Right lobe of liver (tissue), 6 donors: ENCODE measurements at regions of chr3 and their contacts with region 1.

Region 1: DNA sequence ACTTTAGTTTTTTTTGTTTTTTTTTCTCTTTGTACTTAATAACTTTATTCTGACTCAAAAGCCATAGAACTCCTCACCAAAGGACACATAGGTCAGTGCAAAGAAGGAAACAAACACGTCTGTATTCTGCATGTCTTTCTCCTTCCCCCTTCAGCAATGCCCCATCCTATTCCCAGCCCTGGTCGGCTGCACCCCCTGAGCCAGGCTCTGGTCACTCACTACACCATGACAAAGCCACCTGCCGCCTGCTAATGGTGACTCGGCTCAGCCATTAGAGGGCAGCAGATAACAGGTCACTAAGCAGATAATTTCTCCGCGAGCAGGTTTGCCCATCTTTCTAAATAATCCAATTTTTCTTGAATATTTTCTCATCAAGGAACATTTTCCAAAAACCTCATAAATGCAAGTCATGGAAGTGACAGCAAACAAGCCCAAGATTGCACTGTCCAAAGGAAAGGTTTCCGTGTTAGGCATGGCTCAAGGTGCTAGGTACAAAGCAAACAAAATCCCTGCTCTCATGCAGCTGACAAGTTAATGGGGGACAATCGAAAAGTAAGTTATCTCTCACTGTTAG is 37.8 kb downstream of the TM4SF4 start:
- DNase-seq: peak; percentile 62 to 69 (median 68)
- ATAC-seq: peak; percentile 80 to 96 (median 88)
- H3K4me3 ChIP-seq: no peak overlapping the region
- H3K27ac ChIP-seq: no peak overlapping the region
- H3K4me1 ChIP-seq: peaks cover 0 to 26% (median 0%) of the 10 kb centered on the region in 4 donors
- H3K27me3 ChIP-seq: no peaks in the 10 kb centered on the region
- CTCF ChIP-seq: peak; percentile 74 to 93 (median 84)
- POLR2A ChIP-seq: no peak

Region 2: GRCh38 chr3:149717391-149718056 is 205.2 kb after region 1 on chr3:
- intact Hi-C with region 1: loop called (anchors 10 kb)
- DNase-seq: peak in 1 of 3 donors; percentile 57
- ATAC-seq: peak; percentile 87 to 97 (median 90)
- H3K4me3 ChIP-seq: peak overlapping the region in 2 of 3 donors; percentile 17 to 24
- H3K27ac ChIP-seq: no peak overlapping the region
- H3K4me1 ChIP-seq: no peaks in the 10 kb centered on the region
- H3K27me3 ChIP-seq: no peaks in the 10 kb centered on the region
- CTCF ChIP-seq: peak; percentile 69 to 85 (median 74)
- POLR2A ChIP-seq: no peak

Region 3: GRCh38 chr3:149765762-149766334 is 253.6 kb after region 1 on chr3:
- intact Hi-C with region 1: no loop called
- DNase-seq: no peak
- ATAC-seq: peak; percentile 61 to 80 (median 71)
- H3K4me3 ChIP-seq: no peak overlapping the region
- H3K27ac ChIP-seq: no peak overlapping the region
- H3K4me1 ChIP-seq: no peaks in the 10 kb centered on the region
- H3K27me3 ChIP-seq: no peaks in the 10 kb centered on the region
- CTCF ChIP-seq: peak; percentile 48 to 63 (median 58)
- POLR2A ChIP-seq: no peak